CD8-positive, alpha-beta memory T cell (primary cell): ENCODE measurements at regions of chr9 and their contacts with region 1.

Region 1: GRCh38 chr9:113657703-113658544 is 194.4 kb downstream of the RGS3 start:
- DNase-seq: peak; percentile 61 to 82 (median 69)
- H3K4me3 ChIP-seq: no peak overlapping the region
- H3K4me3 Mint-ChIP-seq: no peak overlapping the region
- H3K27ac ChIP-seq: no peak overlapping the region
- H3K27ac Mint-ChIP-seq: peak overlapping the region in 1 of 8 donors; percentile 6
- H3K4me1 ChIP-seq: no peaks in the 10 kb centered on the region
- H3K4me1 Mint-ChIP-seq: peaks cover 0 to 5% (median 3%) of the 10 kb centered on the region in 3 donors
- H3K27me3 ChIP-seq: peaks cover 6% of the 10 kb centered on the region
- H3K27me3 Mint-ChIP-seq: peaks cover 13 to 30% of the 10 kb centered on the region in 2 donors

Region 2: DNA sequence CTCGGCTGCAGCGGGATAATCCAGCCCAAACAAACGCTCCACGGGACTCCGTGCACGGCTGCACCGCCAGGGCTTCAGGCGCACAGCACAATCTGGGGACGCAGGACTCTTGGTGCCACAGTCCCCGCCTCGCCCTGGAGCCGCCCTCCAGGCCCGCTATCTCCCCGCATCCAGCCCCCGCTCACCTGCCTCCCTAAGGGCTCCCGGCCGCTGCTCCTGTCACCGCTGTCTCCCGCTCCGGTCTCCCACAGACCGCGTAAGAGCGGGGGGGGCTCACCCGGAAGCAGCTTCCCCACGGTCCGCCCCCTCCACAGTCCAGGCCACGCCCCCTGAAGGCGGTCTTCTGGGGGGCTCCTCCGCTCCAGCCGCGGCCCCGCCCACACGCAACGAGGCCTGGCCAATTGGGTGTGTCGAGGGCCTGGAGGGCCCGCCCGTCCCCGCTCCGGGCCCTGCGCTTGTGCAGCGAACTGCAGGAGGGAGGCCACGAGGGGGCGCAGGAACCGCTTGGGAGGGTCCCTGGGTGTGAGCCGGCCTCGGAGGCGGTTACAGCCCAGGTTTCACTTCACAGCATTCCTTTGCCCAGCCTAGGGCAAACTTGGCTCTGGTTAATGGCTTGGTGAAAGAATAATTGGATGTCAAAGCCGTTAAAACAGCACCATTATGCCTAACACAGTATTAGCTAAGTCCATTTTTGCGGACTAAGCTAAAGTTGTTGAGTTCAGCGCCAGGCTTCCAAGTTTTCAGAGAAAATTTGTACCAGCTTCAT is 256.7 kb before region 1 on chr9 and contains the start of gene ALAD:
- CTCF ChIA-PET with region 1: interaction called, 28 read pairs
- POLR2A ChIA-PET with region 1: interaction called, 3 read pairs
- DNase-seq: peak; percentile 99 to 100 (median 100)
- H3K4me3 ChIP-seq: peak within 1 kb of the TSS; percentile 82
- H3K4me3 Mint-ChIP-seq: peak within 1 kb of the TSS; percentile 92 to 99 (median 94)
- H3K27ac ChIP-seq: peak within 1 kb of the TSS; percentile 44
- H3K27ac Mint-ChIP-seq: peak within 1 kb of the TSS; percentile 69 to 96 (median 82)
- H3K4me1 ChIP-seq: peaks cover 16% of the 10 kb centered on the region
- H3K4me1 Mint-ChIP-seq: peaks cover 15 to 37% (median 19%) of the 10 kb centered on the region in 3 donors
- H3K27me3 ChIP-seq: no peaks in the 10 kb centered on the region
- H3K27me3 Mint-ChIP-seq: peaks cover 0 to 2% of the 10 kb centered on the region in 2 donors
- total RNA-seq, gene ALAD: 22.3 to 22.8 TPM

Region 3: DNA sequence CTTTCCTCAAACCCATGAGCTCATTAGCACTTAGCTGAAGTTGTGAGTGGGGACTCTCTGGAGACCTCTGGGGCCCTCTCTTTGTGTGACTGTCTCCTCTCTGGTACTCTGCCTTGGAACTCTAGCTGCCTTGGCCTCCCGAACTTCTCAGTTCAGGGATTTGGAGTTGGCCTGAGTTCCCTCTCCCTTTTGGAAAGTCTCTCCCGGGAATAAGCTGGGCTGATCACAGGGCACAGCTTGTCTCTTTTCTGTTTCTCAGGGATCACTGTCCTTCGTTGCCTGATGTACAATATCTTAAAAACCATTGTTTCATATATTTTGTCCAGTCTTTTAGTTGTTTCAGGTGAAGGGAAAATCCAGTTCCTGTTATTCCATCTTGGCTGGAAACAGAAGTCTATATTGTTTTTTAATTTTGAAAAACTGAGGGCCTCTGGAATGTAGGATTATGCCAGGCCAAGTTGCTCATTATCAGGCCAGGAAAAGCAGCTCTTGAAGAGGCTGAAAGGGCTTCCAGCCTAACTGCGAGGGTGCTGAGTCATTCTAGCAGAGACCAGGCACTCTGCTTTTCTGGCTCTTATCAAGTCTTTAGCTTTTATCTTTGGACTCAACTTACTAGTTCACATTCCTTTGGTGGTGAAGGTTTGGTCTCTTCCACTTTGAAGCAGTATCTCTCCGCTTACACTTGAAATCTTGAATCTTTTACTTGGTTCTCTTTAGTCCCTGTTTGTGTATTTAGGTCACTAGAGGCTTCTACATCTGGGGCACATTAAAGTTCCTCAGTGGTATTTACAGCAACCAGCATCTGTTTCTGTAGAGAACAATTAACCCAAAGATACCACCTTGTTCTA is 202.8 kb before region 1 on chr9:
- CTCF ChIA-PET with region 1: interaction called, 14 read pairs
- POLR2A ChIA-PET with region 1: no interaction called
- DNase-seq: no peak
- H3K4me3 ChIP-seq: no peak overlapping the region
- H3K4me3 Mint-ChIP-seq: no peak overlapping the region
- H3K27ac ChIP-seq: no peak overlapping the region
- H3K27ac Mint-ChIP-seq: peak overlapping the region in 4 of 8 donors; percentile 35 to 96 (median 56)
- H3K4me1 ChIP-seq: no peaks in the 10 kb centered on the region
- H3K4me1 Mint-ChIP-seq: peaks cover 1 to 8% (median 8%) of the 10 kb centered on the region in 3 donors
- H3K27me3 ChIP-seq: no peaks in the 10 kb centered on the region
- H3K27me3 Mint-ChIP-seq: peaks cover 0 to 1% of the 10 kb centered on the region in 2 donors

Region 4: GRCh38 chr9:113591001-113591898 is 66.7 kb before region 1 on chr9:
- CTCF ChIA-PET with region 1: interaction called, 45 read pairs
- POLR2A ChIA-PET with region 1: no interaction called
- DNase-seq: peak in 4 of 5 donors; percentile 17 to 49 (median 30)
- H3K4me3 ChIP-seq: no peak overlapping the region
- H3K4me3 Mint-ChIP-seq: no peak overlapping the region
- H3K27ac ChIP-seq: no peak overlapping the region
- H3K27ac Mint-ChIP-seq: peak overlapping the region in 5 of 8 donors; percentile 47 to 74 (median 66)
- H3K4me1 ChIP-seq: peaks cover 4% of the 10 kb centered on the region
- H3K4me1 Mint-ChIP-seq: peaks cover 20 to 35% (median 29%) of the 10 kb centered on the region in 3 donors
- H3K27me3 ChIP-seq: no peaks in the 10 kb centered on the region
- H3K27me3 Mint-ChIP-seq: no peaks in the 10 kb centered on the region

Region 5: GRCh38 chr9:113682297-113682771 is 24.4 kb after region 1 on chr9:
- CTCF ChIA-PET with region 1: no interaction called
- POLR2A ChIA-PET with region 1: no interaction called
- DNase-seq: peak in 4 of 5 donors; percentile 9 to 54 (median 15)
- H3K4me3 ChIP-seq: no peak overlapping the region
- H3K4me3 Mint-ChIP-seq: no peak overlapping the region
- H3K27ac ChIP-seq: no peak overlapping the region
- H3K27ac Mint-ChIP-seq: no peak overlapping the region
- H3K4me1 ChIP-seq: no peaks in the 10 kb centered on the region
- H3K4me1 Mint-ChIP-seq: peaks cover 5 to 11% (median 7%) of the 10 kb centered on the region in 3 donors
- H3K27me3 ChIP-seq: peaks cover 9% of the 10 kb centered on the region
- H3K27me3 Mint-ChIP-seq: peaks cover 36 to 82% of the 10 kb centered on the region in 2 donors